ENCODE measurements at regions of chr12 and their contacts with region 1.

Region 1: GRCh38 chr12:7959701-7960121 is 23.7 kb upstream of the SLC2A3 start:
- DNase-seq: peak; percentile 83
- ATAC-seq: peak; percentile 59
- H3K4me3 Mint-ChIP-seq: peak overlapping the region; percentile 88
- H3K27ac Mint-ChIP-seq: peak overlapping the region; percentile 88
- H3K4me1 Mint-ChIP-seq: peaks cover 41% of the 10 kb centered on the region
- H3K27me3 Mint-ChIP-seq: no peaks in the 10 kb centered on the region

Region 2: DNA sequence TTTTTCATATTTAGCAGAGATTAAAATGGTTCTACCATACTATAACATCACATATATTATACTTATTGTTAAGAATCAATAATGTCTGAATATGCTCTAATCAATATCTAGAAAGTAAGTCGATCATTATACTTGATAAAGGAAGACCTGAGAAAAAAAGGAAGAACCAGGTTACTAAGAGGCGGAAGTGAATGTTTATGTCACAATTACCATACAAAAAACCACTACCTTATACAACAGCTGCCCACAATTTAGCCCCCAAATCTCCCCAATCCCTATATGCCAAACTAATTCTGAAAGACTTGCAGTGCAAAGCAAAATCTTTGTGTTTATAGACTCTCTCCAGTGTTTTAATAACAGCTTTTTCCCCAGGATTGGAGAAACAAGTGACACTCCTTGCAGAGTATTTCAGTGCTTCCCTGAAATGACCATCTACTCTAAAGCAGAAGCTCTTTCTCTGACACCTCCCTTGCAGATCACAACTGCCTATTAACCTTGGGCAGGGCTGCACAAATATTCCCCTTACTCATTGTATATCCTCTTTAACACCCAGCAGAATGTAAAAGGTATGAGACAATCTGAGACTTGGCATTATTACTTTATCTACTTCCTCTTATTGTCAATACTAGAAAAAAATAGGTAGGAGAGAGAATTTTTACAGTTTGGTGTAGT is 11.0 kb before region 1 on chr12:
- CTCF ChIA-PET with region 1: interaction called, 15 read pairs
- DNase-seq: no peak
- ATAC-seq: no peak
- H3K4me3 Mint-ChIP-seq: no peak overlapping the region
- H3K27ac Mint-ChIP-seq: peak overlapping the region; percentile 22
- H3K4me1 Mint-ChIP-seq: peaks cover 7% of the 10 kb centered on the region
- H3K27me3 Mint-ChIP-seq: no peaks in the 10 kb centered on the region

Region 3: DNA sequence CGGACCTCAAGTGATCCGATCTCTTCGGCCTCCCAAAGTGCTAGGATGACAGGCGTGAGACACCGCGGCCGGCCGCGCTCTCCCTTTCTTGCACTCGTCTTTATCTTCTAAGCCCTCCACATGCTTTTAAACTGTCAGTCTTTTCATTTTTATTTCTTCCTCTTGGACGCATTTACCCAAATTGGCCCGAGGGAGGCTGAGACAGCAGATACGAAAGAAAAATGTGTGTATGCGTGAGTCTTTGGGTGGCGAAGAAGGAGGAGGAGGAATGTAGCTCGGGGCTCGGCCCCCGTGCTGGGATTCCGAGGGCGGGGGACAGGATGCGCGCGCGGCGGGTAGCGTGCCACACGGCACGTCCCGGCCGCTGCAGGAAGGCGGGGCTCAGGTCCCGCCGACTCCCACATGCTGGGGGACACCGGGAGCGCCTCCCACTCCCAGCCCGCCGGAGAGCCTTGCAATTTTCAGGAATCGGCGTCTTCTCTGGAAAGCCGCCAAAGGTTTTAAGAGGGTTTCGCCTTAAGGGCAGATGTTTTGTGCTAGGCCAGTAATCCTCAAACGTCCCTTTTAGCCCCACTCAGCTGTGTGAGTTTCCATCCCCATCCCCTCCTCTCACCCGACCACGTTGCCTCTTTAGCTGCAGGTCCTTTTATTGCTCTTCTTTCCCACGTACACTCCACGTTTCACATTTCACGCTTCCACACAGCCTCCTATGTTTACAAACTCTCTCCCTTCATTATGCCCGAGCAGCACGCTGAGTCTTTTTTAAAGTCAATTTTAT is 11.0 kb after region 1 on chr12:
- CTCF ChIA-PET with region 1: interaction called, 28 read pairs
- DNase-seq: peak; percentile 93
- ATAC-seq: peak; percentile 94
- H3K4me3 Mint-ChIP-seq: peak overlapping the region; percentile 78
- H3K27ac Mint-ChIP-seq: peak overlapping the region; percentile 94
- H3K4me1 Mint-ChIP-seq: peaks cover 38% of the 10 kb centered on the region
- H3K27me3 Mint-ChIP-seq: no peaks in the 10 kb centered on the region

Region 4: GRCh38 chr12:7995266-7995963 is 35.7 kb after region 1 on chr12:
- CTCF ChIA-PET with region 1: interaction called, 42 read pairs
- DNase-seq: peak; percentile 91
- ATAC-seq: peak; percentile 96
- H3K4me3 Mint-ChIP-seq: no peak overlapping the region
- H3K27ac Mint-ChIP-seq: no peak overlapping the region
- H3K4me1 Mint-ChIP-seq: peaks cover 22% of the 10 kb centered on the region
- H3K27me3 Mint-ChIP-seq: no peaks in the 10 kb centered on the region

Region 5: DNA sequence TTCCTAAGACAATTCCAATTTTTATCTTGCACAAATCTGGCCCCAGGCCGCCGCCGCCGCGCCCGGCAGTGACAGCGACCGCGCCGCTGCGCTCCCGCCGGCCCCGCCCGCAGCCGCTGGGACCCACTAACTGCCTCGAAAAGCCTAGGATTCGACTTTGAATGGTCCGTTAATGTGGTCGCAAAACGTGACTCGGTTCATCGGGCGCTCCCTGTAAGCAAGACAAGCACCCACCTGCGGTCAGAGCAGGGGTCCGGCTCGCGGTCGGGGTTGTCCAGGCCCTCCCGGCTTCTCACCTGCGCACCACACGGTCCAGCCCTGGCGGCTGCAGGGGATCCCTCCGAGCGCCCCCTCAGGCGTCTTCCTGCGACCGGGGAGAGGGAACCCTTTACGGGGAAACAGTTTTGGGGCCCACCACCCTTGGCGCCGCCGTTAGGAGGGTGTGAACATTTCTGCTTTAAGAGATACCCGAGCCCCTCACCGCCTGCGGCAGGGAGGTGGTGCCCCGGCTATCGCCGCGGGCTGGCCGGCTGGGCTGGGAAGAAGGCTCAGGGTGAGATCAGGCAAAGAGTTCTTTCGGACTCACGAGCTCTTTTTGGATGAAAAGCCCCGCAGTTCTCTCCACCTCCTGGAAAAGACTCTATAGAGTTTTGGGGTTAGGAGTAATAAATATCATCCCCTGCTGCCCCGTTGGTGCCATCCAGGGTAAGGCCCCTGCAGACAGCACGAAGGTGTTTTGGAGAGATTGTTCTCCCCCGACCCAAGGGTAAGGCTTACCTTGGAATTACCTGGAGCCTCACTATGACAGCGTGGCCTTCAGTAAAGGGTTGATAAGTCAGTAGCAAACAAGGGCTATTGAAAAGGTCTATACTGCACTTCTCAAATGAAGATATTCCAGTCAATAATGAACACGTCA is 59.2 kb after region 1 on chr12:
- CTCF ChIA-PET with region 1: no interaction called
- DNase-seq: peak; percentile 61
- ATAC-seq: peak; percentile 82
- H3K4me3 Mint-ChIP-seq: peak overlapping the region; percentile 57
- H3K27ac Mint-ChIP-seq: no peak overlapping the region
- H3K4me1 Mint-ChIP-seq: peaks cover 6% of the 10 kb centered on the region
- H3K27me3 Mint-ChIP-seq: peaks cover 28% of the 10 kb centered on the region

Measured in activated CD8-positive, alpha-beta memory T cell treated with anti-CD3 and anti-CD28 coated beads, Interleukin-2, amount 10 ng/mL, durations not matched to agents 7 days and 5 days (primary cell).